ENCODE measurements at regions of chr3 and their contacts with region 1.

Region 1: GRCh38 chr3:108818404-108818803 is 4.2 kb upstream of the TRAT1 start:
- DNase-seq: peak; percentile 78
- H3K4me3 Mint-ChIP-seq: peak overlapping the region; percentile 1
- H3K27ac Mint-ChIP-seq: peak overlapping the region; percentile 22
- H3K4me1 Mint-ChIP-seq: peaks cover 31% of the 10 kb centered on the region
- H3K27me3 Mint-ChIP-seq: no peaks in the 10 kb centered on the region

Region 2: GRCh38 chr3:108602249-108602934 is 216.0 kb before region 1 on chr3:
- CTCF ChIA-PET with region 1: interaction called, 3 read pairs
- POLR2A ChIA-PET with region 1: interaction called, 13 read pairs
- DNase-seq: peak; percentile 43
- H3K4me3 Mint-ChIP-seq: peak overlapping the region; percentile 45
- H3K27ac Mint-ChIP-seq: peak overlapping the region; percentile 53
- H3K4me1 Mint-ChIP-seq: peaks cover 58% of the 10 kb centered on the region
- H3K27me3 Mint-ChIP-seq: no peaks in the 10 kb centered on the region

Region 3: GRCh38 chr3:108662130-108662738 is 156.2 kb before region 1 on chr3:
- CTCF ChIA-PET with region 1: interaction called, 80 read pairs
- POLR2A ChIA-PET with region 1: interaction called, 7 read pairs
- DNase-seq: peak; percentile 52
- H3K4me3 Mint-ChIP-seq: no peak overlapping the region
- H3K27ac Mint-ChIP-seq: no peak overlapping the region
- H3K4me1 Mint-ChIP-seq: peaks cover 16% of the 10 kb centered on the region
- H3K27me3 Mint-ChIP-seq: peaks cover 2% of the 10 kb centered on the region

Region 4: DNA sequence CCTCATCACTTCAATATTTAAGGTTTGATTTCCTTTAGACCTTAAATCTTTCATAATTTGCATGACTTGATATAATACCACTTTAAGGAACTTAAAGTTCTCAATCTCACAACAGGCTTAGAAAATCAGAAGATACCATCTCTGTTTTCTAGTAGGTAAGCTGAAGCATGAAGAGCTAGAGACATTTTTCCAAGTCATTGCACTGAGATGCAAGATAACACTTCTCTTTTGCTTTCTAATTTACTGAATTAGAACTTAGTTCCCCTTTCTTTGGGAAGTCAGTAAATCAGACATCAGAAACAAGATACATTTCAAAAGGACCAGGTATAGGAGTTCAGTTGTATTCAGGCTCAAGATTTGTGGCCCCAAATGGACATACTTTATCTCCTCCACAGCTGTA is 149.2 kb before region 1 on chr3:
- CTCF ChIA-PET with region 1: interaction called, 80 read pairs
- POLR2A ChIA-PET with region 1: interaction called, 4 read pairs
- DNase-seq: no peak
- H3K4me3 Mint-ChIP-seq: no peak overlapping the region
- H3K27ac Mint-ChIP-seq: no peak overlapping the region
- H3K4me1 Mint-ChIP-seq: peaks cover 19% of the 10 kb centered on the region
- H3K27me3 Mint-ChIP-seq: no peaks in the 10 kb centered on the region

Region 5: DNA sequence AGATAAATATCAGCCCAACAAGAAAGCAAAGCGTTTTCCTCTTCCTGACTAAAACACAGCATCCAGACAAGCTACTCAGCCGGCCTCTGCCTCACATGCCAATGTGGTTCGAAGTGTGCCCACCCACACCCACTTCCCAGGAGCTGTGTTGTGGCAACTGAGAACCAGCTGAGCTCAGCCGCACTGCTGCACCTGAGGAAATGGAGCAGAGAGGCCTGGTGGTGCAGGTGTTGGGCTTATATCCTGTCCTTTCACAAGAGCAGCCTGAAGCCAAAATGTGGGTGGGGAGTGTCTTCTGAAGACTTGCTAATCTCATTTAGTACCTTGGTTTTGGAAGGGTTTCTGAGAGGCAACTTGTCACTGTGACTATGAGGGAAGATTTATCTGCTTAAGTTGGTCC is 38.2 kb before region 1 on chr3:
- CTCF ChIA-PET with region 1: no interaction called
- POLR2A ChIA-PET with region 1: no interaction called
- DNase-seq: peak; percentile 50
- H3K4me3 Mint-ChIP-seq: no peak overlapping the region
- H3K27ac Mint-ChIP-seq: peak overlapping the region; percentile 48
- H3K4me1 Mint-ChIP-seq: peaks cover 30% of the 10 kb centered on the region
- H3K27me3 Mint-ChIP-seq: peaks cover under 1% of the 10 kb centered on the region

Region 6: DNA sequence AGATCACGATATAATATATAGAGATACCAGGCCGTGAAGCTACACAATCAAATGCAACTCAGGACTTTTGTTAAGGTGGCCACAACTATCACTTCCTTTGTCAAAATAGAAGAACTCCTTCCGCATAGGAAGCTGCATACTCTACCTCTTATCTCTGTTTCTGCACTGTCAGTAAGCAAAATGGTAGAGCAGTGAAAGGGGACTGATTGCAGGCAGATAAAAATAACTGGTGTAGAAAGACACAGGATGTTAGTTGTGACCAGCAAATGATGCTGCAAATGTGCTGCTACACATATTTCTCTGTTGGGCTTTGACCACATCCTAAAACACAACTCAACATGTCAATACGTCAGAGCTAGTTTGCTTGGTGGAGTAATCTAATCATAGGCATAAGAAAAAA is 12.1 kb before region 1 on chr3:
- CTCF ChIA-PET with region 1: interaction called, 53 read pairs
- POLR2A ChIA-PET with region 1: interaction called, 71 read pairs
- DNase-seq: peak; percentile 59
- H3K4me3 Mint-ChIP-seq: peak overlapping the region; percentile 12
- H3K27ac Mint-ChIP-seq: peak overlapping the region; percentile 92
- H3K4me1 Mint-ChIP-seq: peaks cover 36% of the 10 kb centered on the region
- H3K27me3 Mint-ChIP-seq: no peaks in the 10 kb centered on the region

Region 7: GRCh38 chr3:108835101-108835500 is 16.7 kb after region 1 on chr3:
- CTCF ChIA-PET with region 1: interaction called, 52 read pairs
- POLR2A ChIA-PET with region 1: interaction called, 481 read pairs
- DNase-seq: peak; percentile 40
- H3K4me3 Mint-ChIP-seq: peak overlapping the region; percentile 77
- H3K27ac Mint-ChIP-seq: peak overlapping the region; percentile 95
- H3K4me1 Mint-ChIP-seq: peaks cover 81% of the 10 kb centered on the region
- H3K27me3 Mint-ChIP-seq: no peaks in the 10 kb centered on the region

Region 8: GRCh38 chr3:108845709-108846293 is 27.4 kb after region 1 on chr3:
- CTCF ChIA-PET with region 1: interaction called, 46 read pairs
- POLR2A ChIA-PET with region 1: interaction called, 481 read pairs
- DNase-seq: no peak
- H3K4me3 Mint-ChIP-seq: no peak overlapping the region
- H3K27ac Mint-ChIP-seq: peak overlapping the region; percentile 82
- H3K4me1 Mint-ChIP-seq: peaks cover 78% of the 10 kb centered on the region
- H3K27me3 Mint-ChIP-seq: no peaks in the 10 kb centered on the region

Measured in activated CD4-positive, alpha-beta memory T cell treated with anti-CD3 and anti-CD28 coated beads, Interleukin-2, amount 10 ng/mL, durations not matched to agents 7 days and 5 days (primary cell).